Activated CD4-positive, alpha-beta memory T cell treated with anti-CD3 and anti-CD28 coated beads, Interleukin-2, amount 10 ng/mL, durations not matched to agents 7 days and 5 days (primary cell): ENCODE measurements at regions of chr1 and their contacts with region 1.

Region 1: DNA sequence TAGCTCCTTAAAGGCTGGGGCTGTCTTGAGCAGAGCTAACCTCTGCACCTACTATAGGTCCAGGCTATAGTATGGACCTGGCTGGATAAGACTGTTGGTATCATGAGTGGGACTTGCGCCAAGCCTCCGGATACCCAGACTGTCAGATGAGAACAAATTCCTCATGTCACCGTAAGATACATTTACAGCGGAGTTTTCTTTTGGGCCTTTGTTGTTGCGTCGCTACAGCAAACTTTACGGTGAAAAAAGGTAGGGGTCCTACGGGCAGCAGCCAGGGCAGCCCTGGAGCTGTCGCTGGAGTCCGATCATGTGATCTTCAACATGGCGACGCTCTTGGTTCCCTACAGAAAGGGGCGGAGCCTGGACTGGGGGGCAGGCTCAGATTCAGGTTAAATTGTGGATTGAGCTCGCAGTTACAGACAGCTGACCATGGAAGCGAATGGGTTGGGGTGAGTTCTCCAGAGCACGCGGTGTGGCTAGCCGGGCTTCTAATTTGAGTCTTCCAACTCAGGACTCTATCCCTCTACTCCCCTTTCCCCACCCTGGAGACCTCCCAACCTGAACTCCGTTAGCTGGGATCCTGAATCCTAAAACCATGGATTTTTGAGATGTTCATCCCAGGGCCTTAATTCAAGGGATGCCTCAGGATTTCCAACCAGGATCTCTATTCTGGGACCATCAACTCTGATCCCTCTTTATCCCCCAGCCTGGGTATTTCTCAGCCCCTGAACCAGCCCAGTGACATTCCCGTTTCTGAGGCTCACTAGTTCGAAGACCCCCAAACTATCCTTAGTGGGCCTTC is at the start of gene UROD:
- DNase-seq: peak; percentile 94
- H3K4me3 Mint-ChIP-seq: peak within 1 kb of the TSS; percentile 81
- H3K27ac Mint-ChIP-seq: peak within 1 kb of the TSS; percentile 85
- H3K4me1 Mint-ChIP-seq: peaks cover 47% of the 10 kb centered on the region
- H3K27me3 Mint-ChIP-seq: no peaks in the 10 kb centered on the region
- total RNA-seq, gene UROD: 67.1 to 74.9 TPM

Region 2: DNA sequence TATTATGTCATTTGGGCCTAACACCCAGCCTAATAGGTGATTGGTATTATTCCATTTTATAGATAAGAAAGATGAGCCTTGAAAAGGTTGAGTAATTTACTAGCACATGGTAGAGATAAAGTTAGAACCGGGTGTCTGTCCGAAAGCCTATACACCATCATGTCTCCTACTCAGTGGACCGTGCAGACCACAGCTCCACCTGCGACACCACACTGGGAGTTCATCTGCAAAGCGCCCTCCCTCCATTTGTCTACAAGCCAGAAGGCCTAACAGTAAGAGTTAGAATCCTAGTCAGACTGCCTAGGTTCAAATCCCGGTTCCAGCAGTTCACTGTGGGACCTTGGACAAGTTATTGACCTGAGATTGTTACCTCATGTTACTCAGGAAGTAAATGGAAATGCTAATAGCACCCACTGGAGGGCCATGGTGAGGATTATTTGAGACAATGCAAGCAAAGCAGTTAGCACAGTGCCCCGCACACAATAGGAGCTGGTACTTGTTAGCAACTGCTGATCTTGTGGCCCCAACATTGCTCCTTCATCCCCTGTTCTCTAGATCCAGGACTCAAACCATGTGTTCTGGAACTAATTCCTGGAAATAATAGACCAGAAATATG is 317.1 kb before region 1 on chr1:
- CTCF ChIA-PET with region 1: no interaction called
- POLR2A ChIA-PET with region 1: no interaction called
- DNase-seq: no peak
- H3K4me3 Mint-ChIP-seq: no peak overlapping the region
- H3K27ac Mint-ChIP-seq: no peak overlapping the region
- H3K4me1 Mint-ChIP-seq: peaks cover 21% of the 10 kb centered on the region
- H3K27me3 Mint-ChIP-seq: peaks cover 4% of the 10 kb centered on the region

Region 3: GRCh38 chr1:44786138-44786840 is 225.7 kb before region 1 on chr1:
- CTCF ChIA-PET with region 1: interaction called, 12 read pairs
- POLR2A ChIA-PET with region 1: interaction called, 8 read pairs
- DNase-seq: peak; percentile 78
- H3K4me3 Mint-ChIP-seq: peak overlapping the region; percentile 59
- H3K27ac Mint-ChIP-seq: no peak overlapping the region
- H3K4me1 Mint-ChIP-seq: peaks cover 36% of the 10 kb centered on the region
- H3K27me3 Mint-ChIP-seq: no peaks in the 10 kb centered on the region

Region 4: DNA sequence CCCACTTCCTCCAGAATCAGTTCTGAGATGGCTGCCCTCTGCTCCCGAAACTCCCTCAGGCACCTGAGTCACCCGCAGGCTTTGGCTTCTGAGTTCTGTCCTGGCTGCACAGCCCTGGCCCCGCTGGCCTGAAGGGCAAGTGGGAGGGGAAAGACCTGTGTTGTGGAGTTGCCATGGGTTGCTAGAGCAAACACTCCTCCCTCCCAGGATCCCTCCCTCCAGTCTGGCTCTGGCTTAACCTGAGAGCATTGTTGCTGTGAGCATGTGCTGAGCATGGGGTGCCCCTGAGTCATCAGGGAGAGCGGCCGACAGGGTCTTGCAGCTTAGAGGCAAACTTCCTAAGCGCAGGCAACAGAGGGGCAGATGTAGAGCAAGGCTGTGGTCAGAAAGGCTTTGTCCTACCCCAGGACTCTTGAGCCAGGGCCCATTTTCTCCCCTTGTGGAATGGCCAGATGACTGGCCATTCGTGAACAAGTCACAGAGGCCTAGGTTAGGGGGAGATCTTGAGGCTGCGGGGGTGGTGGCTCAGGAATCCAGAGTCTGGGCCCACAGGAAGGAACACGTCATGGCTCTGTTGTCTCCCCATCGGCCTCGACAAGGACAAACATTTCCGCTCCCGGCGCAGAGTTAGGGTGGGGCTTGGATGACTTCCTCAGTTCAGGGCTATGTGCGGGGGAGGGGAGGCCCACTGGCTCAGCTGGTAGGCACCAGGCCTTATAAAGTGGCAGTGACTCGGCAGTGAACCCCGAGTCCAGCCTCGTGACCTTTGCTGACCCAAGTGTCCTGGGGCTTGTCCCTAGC is 204.6 kb before region 1 on chr1 and contains the start of gene DYNLT4:
- CTCF ChIA-PET with region 1: interaction called, 5 read pairs
- POLR2A ChIA-PET with region 1: interaction called, 23 read pairs
- DNase-seq: peak; percentile 93
- H3K4me3 Mint-ChIP-seq: peak within 1 kb of the TSS; percentile 73
- H3K27ac Mint-ChIP-seq: peak within 1 kb of the TSS; percentile 98
- H3K4me1 Mint-ChIP-seq: peaks cover 92% of the 10 kb centered on the region
- H3K27me3 Mint-ChIP-seq: no peaks in the 10 kb centered on the region
- total RNA-seq, gene DYNLT4: 1.9 to 2.2 TPM

Region 5: GRCh38 chr1:44909901-44910544 is 102.0 kb before region 1 on chr1:
- CTCF ChIA-PET with region 1: no interaction called
- POLR2A ChIA-PET with region 1: no interaction called
- DNase-seq: no peak
- H3K4me3 Mint-ChIP-seq: no peak overlapping the region
- H3K27ac Mint-ChIP-seq: no peak overlapping the region
- H3K4me1 Mint-ChIP-seq: no peaks in the 10 kb centered on the region
- H3K27me3 Mint-ChIP-seq: no peaks in the 10 kb centered on the region

Region 6: DNA sequence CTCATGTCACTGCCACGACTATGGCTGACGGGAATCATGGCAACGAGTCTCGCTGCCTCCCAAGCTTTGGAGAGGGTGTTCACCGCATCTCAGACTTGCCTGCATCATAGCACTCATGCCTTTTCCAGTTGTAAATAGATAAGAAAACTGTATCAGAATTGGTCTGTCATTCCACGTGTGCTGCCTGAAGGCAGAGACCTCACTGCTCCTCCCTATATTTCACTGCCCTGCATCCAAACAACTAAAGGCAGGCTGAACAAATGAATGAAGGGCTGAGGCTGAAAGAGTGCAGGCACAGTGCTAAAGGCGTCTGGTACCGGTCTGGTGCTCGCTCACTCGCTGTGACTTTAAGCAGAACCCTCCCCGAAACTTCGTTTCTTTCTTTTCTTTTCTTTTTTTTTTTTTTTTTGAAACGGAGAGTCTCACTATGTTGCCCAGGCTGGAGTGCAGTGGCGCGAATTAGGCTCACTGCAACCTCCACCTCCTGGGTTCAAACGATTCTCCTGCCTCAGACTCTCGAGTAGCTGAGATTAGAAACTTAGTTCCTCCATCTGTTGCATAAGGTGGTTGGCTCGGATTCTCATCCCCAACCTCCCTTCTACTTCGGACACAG is 26.2 kb before region 1 on chr1:
- CTCF ChIA-PET with region 1: interaction called, 24 read pairs
- POLR2A ChIA-PET with region 1: interaction called, 53 read pairs
- DNase-seq: no peak
- H3K4me3 Mint-ChIP-seq: peak overlapping the region; percentile 90
- H3K27ac Mint-ChIP-seq: peak overlapping the region; percentile 86
- H3K4me1 Mint-ChIP-seq: peaks cover 28% of the 10 kb centered on the region
- H3K27me3 Mint-ChIP-seq: peaks cover 2% of the 10 kb centered on the region

Region 7: GRCh38 chr1:45044916-45045315 is 32.9 kb after region 1 on chr1:
- CTCF ChIA-PET with region 1: no interaction called
- POLR2A ChIA-PET with region 1: no interaction called
- DNase-seq: no peak
- H3K4me3 Mint-ChIP-seq: no peak overlapping the region
- H3K27ac Mint-ChIP-seq: no peak overlapping the region
- H3K4me1 Mint-ChIP-seq: peaks cover 2% of the 10 kb centered on the region
- H3K27me3 Mint-ChIP-seq: no peaks in the 10 kb centered on the region

Region 8: GRCh38 chr1:45230540-45230939 is 218.5 kb after region 1 on chr1:
- CTCF ChIA-PET with region 1: no interaction called
- POLR2A ChIA-PET with region 1: no interaction called
- DNase-seq: no peak
- H3K4me3 Mint-ChIP-seq: no peak overlapping the region
- H3K27ac Mint-ChIP-seq: no peak overlapping the region
- H3K4me1 Mint-ChIP-seq: no peaks in the 10 kb centered on the region
- H3K27me3 Mint-ChIP-seq: no peaks in the 10 kb centered on the region

Region 9: DNA sequence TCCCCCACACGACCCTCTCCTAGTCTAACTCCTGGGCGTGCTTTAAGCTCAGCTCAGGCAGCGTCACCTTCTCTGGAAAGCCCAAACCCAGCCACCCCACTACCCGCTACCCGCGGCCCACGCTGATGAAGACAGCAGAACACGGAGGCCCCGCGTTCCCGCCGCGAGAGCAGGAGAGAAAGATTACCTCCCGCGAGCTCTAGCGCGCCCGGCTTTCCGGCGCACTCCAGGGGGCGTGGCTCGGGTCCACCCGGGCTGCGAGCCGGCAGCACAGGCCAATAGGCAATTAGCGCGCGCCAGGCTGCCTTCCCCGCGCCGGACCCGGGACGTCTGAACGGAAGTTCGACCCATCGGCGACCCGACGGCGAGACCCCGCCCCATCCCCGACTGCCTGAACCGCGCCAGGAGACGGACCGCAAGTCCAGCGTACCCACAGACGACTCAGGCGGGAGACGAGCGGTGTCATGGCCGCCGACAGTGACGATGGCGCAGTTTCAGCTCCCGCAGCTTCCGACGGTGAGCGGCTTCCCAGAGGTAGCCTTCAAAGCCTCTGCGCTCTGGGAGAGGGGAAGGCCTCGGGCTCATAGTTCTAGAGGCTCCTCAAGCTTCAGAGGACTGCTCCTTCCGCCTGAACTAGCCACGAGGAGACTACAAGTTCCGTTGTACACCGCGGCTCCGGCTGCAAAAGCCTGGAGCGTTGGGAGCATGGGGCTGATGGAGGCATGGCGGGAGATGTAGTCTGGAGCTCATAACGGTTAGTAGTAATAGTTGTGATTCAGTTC is 327.9 kb after region 1 on chr1 and contains the starts of genes MUTYH and TOE1:
- CTCF ChIA-PET with region 1: interaction called, 16 read pairs
- POLR2A ChIA-PET with region 1: interaction called, 55 read pairs
- DNase-seq: peak; percentile 96
- H3K4me3 Mint-ChIP-seq: peak within 1 kb of the TSS; percentile 96
- H3K27ac Mint-ChIP-seq: peak within 1 kb of the TSS; percentile 100
- H3K4me1 Mint-ChIP-seq: peaks cover 58% of the 10 kb centered on the region
- H3K27me3 Mint-ChIP-seq: no peaks in the 10 kb centered on the region
- total RNA-seq, gene MUTYH: 37.2 to 39.2 TPM
- total RNA-seq, gene TOE1: 16.6 to 18.3 TPM

Region 10: DNA sequence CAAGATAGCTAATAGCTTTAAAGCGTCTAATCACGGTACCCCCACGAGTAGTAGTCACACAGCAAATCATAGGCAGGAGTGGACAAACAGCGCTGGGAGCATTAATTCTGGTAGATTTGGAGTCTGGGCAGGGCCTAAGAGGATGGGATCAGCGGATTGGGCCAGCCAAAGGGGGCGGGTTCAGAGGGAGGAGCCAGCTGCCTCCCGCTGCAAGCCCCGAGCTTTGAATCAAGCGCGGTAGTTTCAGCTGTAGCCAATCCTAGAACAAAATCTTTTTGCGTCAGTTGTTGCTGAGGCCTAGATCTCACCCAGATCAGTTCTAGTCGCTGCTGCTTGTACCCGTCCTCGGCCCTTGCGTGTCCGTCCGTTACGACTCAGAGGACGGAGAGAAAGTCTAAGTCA is 571.2 kb after region 1 on chr1:
- CTCF ChIA-PET with region 1: no interaction called
- POLR2A ChIA-PET with region 1: interaction called, 14 read pairs
- DNase-seq: peak; percentile 96
- H3K4me3 Mint-ChIP-seq: peak overlapping the region; percentile 88
- H3K27ac Mint-ChIP-seq: peak overlapping the region; percentile 98
- H3K4me1 Mint-ChIP-seq: peaks cover 29% of the 10 kb centered on the region
- H3K27me3 Mint-ChIP-seq: no peaks in the 10 kb centered on the region